Mammary epithelial cell (primary cell): ENCODE measurements at regions of chr4 and their contacts with region 1.

Region 1: GRCh38 chr4:98467627-98468072 is 190.8 kb downstream of the TSPAN5 start:
- DNase-seq: peak; percentile 81
- H3K4me3 ChIP-seq: peak overlapping the region; percentile 25 to 42 (median 41)
- H3K27ac ChIP-seq: no peak overlapping the region
- H3K4me1 ChIP-seq: peaks cover 18% of the 10 kb centered on the region
- H3K27me3 ChIP-seq: no peaks in the 10 kb centered on the region
- CTCF ChIP-seq: peak; percentile 80 to 82

Region 2: DNA sequence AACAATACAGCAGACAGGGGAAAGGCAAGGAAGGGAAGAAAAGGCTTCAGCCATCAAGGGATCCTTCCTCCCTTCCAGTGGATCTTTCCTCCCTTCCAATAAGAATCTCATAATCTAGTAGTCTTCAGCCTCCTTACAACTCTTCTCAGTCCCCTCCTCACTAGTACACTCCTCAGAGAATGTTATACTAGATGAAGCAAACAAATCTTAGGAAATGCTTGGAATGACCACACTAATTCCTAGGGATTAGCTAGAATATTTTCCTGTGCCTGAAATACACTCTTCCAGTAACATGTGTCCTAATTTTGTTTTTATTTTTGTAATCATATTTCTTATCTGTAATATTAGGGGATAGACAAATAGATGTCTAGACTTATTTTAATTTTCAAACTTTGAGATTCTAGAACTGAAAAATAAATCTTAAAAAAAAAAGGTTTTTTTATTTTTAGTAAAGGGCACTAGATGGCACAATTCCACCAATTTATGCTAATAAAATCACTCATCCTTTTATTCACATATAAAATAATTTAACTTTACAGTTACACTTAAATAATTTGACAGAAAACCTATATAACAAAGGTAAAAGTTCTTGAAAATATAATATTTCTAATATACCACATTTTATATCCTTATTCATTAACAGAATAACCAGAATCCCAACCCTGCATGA is 317.4 kb before region 1 on chr4:
- CTCF ChIA-PET with region 1: no interaction called
- dilution Hi-C with region 1: no loop called
- in situ Hi-C with region 1: no loop called
- intact Hi-C with region 1: loop called (anchors 2 kb)
- DNase-seq: no peak
- H3K4me3 ChIP-seq: no peak overlapping the region
- H3K27ac ChIP-seq: no peak overlapping the region
- H3K4me1 ChIP-seq: no peaks in the 10 kb centered on the region
- H3K27me3 ChIP-seq: no peaks in the 10 kb centered on the region
- CTCF ChIP-seq: peak in 1 of 2 donors; percentile 14

Region 3: DNA sequence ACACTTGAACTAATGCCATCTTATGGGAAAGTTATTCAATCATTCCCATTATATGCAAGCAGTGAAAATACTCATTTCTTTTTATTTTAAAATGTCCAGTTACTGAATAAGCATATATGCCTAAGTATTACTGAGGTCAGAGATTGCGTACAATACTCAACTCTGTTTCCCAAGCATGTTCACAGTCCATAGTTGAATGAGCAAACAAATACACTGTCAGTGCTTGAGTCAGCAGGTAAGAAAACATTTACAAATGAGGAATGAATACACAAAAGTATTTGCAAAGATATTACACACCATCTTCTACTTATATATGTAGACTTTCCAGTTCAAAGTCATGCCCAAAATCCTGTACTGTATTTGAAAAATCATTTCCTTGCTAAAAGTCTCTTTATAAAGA is 116.6 kb after region 1 on chr4:
- CTCF ChIA-PET with region 1: interaction called, 3 read pairs
- dilution Hi-C with region 1: no loop called
- in situ Hi-C with region 1: no loop called
- intact Hi-C with region 1: loop called (anchors 5 kb)
- DNase-seq: peak; percentile 37
- H3K4me3 ChIP-seq: no peak overlapping the region
- H3K27ac ChIP-seq: no peak overlapping the region
- H3K4me1 ChIP-seq: peaks cover 26% of the 10 kb centered on the region
- H3K27me3 ChIP-seq: no peaks in the 10 kb centered on the region
- CTCF ChIP-seq: no peak

Region 4: DNA sequence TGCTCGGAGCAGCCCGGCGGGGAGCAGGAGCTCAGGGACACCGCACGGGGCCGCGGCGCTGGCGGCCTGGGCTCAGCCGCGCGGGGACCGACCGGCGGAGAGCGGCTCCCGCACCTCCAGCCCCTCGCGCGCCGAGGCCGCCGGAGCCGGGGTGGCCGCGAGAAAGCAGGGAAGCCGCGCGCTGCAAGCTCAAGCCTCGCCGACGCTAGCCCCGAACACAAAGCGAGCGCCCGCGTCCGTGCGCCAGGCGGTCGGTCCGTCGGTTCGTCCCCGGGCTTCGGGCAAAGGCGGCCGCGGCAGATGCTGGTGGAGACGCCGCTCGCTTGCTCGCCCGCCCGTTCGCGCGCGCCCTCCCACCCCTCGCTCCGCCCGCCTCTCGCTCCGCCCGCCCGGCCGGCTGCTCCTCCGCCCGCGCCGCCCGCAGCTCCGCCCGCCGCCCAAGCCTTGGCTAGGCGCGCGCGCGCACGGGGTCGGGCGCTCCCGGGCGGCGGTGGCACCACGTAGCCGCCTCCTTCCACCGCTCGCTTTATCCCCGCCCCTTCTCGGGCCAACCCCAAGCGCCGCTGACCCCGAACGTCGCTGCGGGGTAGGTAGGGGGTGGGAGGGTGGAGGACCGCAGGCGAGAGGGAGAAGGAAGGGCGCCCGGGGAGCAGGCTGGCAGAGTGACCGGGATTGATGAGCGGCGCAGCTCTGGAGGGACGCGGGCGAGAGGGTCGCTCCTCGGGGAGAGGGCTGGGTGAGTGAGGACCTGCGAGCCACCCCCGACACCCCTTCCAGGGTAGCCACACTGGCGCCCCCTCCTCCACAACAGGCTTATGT is 190.8 kb after region 1 on chr4 and contains the start of gene TSPAN5:
- CTCF ChIA-PET with region 1: interaction called, 3 read pairs
- dilution Hi-C with region 1: no loop called
- in situ Hi-C with region 1: loop called in 1 of 2 experiments (anchors 10 kb)
- intact Hi-C with region 1: loop called (anchors 1 kb)
- DNase-seq: peak; percentile 80
- H3K4me3 ChIP-seq: peak within 1 kb of the TSS; percentile 65 to 89 (median 83)
- H3K27ac ChIP-seq: peak within 1 kb of the TSS; percentile 57
- H3K4me1 ChIP-seq: peaks cover 57% of the 10 kb centered on the region
- H3K27me3 ChIP-seq: no peaks in the 10 kb centered on the region
- CTCF ChIP-seq: no peak
- total RNA-seq, gene TSPAN5: 19.0 to 38.4 TPM

Region 5: GRCh38 chr4:98851806-98852205 is 384.2 kb after region 1 on chr4:
- CTCF ChIA-PET with region 1: no interaction called
- dilution Hi-C with region 1: no loop called
- in situ Hi-C with region 1: loop called in 1 of 2 experiments (anchors 25 kb)
- intact Hi-C with region 1: loop called (anchors 2 kb)
- DNase-seq: no peak
- H3K4me3 ChIP-seq: no peak overlapping the region
- H3K27ac ChIP-seq: no peak overlapping the region
- H3K4me1 ChIP-seq: no peaks in the 10 kb centered on the region
- H3K27me3 ChIP-seq: no peaks in the 10 kb centered on the region
- CTCF ChIP-seq: no peak

Region 6: DNA sequence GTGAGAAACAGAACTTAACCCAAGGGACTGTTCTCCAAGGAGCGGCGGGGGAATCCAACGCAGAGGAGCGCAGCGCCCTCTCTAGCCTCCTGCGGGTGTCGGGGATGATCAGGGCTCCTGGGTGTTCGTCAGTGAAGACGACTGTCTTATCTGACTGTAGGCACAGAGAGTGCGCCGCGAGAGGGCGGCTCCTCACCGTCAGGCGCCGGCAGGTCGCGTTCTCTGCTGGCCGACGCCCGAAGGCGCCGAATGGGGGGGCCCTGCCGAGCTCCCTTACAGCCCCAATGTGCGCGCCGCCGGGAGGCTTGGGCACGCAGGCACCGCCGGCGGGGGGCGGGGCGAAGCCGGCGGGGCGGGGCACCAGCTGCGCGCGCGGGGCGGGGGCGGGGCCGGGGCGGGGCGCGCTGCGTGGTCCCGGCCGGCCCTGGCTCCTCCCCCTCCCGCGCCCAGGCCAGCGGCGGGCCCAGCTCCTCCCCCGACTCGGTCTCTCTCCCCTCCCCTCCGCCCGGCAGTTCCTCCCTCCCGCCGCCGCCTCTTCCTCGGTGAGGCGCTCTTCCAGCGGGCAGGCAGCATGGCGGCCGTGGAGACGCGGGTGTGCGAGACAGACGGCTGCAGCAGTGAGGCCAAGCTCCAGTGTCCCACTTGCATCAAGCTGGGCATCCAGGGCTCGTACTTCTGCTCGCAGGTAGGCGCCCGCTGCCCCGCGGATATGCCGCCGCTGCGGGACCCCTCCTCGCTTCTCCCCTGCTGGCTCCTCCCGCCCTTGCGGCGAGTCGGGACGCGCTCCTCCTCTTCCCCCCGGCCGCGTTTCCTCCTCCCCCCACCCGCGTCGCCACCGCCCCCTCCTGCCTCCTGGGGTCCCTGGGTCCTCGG is 527.8 kb after region 1 on chr4 and contains the start of gene METAP1:
- CTCF ChIA-PET with region 1: no interaction called
- dilution Hi-C with region 1: no loop called
- in situ Hi-C with region 1: no loop called
- intact Hi-C with region 1: loop called (anchors 5 kb)
- DNase-seq: peak; percentile 97
- H3K4me3 ChIP-seq: peak within 1 kb of the TSS; percentile 94 to 98 (median 97)
- H3K27ac ChIP-seq: peak within 1 kb of the TSS; percentile 81
- H3K4me1 ChIP-seq: peaks cover 27% of the 10 kb centered on the region
- H3K27me3 ChIP-seq: no peaks in the 10 kb centered on the region
- CTCF ChIP-seq: peak; percentile 34 to 79
- total RNA-seq, gene METAP1: 67.7 to 72.7 TPM